ENCODE measurements at regions of chr5 and their contacts with region 1.

Region 1: GRCh38 chr5:133111299-133111698 is 59.5 kb downstream of the HSPA4 start:
- DNase-seq: peak; percentile 85 to 93
- ATAC-seq: peak; percentile 80 to 88 (median 82)
- H3K4me3 ChIP-seq: no peak overlapping the region
- H3K27ac ChIP-seq: no peak overlapping the region
- H3K4me1 ChIP-seq: peaks cover 20% of the 10 kb centered on the region
- H3K27me3 ChIP-seq: no peaks in the 10 kb centered on the region
- CTCF ChIP-seq: peak; percentile 91

Region 2: DNA sequence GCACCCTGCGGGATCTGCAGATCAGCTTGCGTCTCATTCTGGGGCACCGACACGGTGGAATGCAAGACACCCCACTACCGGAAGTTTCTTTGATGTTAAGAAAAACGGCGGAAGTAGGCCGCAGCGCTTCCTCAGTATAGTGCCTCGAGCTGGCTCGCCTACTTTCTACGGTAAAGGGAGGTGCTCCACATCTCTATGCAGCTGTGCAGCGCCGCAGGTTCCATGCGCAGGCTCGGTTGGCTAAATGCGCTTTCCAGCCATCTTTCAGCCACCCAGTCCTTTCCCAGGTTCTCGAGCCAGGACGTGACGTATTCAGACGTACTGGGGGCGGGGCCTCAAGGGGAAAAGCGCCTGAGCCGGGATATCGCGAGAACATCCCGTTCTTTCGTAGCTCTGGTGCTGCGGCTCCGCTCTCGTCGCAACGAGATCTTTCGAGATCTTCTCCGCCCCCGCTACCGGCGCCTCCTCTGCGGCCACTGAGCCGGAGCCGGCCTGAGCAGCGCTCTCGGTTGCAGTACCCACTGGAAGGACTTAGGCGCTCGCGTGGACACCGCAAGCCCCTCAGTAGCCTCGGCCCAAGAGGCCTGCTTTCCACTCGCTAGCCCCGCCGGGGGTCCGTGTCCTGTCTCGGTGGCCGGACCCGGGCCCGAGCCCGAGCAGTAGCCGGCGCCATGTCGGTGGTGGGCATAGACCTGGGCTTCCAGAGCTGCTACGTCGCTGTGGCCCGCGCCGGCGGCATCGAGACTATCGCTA is 59.5 kb before region 1 on chr5 and contains the start of gene HSPA4:
- intact Hi-C with region 1: no loop called
- DNase-seq: peak; percentile 97 to 98
- ATAC-seq: peak; percentile 91 to 92 (median 92)
- H3K4me3 ChIP-seq: peak within 1 kb of the TSS; percentile 98
- H3K27ac ChIP-seq: peak within 1 kb of the TSS; percentile 100
- H3K4me1 ChIP-seq: peaks cover 39% of the 10 kb centered on the region
- H3K27me3 ChIP-seq: no peaks in the 10 kb centered on the region
- CTCF ChIP-seq: no peak
- total RNA-seq, gene HSPA4: 108 to 154 (median 130) TPM

Region 3: DNA sequence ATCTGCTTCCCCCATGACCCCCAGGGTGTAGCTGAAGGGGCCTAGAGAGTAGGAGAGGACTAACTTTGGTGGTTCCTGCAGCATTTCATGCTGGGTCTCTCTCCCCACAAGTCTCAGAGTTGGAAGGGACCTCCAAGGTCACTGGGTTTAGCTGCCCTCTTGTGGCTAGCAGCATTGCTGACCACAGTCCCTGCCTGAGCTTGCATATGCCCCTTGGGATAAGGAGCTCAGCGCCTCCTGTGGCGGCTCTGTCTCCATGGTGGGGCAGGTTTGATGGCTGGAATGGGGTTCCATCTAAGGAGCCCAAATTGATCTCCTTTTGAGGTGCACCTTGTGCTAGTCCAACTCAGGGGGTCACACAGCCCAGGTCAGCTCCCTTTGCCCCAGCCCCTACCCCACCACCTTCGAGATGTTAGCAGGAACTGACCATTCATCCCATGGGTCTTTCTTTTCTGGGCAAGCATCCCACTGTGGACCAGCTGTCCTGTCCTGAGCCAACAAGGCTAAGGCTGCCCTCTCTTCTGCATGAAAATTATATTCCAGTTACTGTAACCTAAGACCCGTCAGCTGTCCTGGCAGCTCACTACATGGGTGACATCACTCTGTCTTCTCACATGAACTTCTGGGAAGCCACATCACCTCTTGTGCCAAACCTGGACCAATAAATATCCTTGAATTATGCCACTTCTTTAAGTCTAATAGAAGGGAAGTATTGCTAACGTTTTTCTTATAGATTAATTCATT is 136.8 kb after region 1 on chr5:
- intact Hi-C with region 1: loop called (anchors 2 to 10 kb)
- DNase-seq: peak; percentile 55 to 80
- ATAC-seq: peak; percentile 93 to 96 (median 94)
- H3K4me3 ChIP-seq: no peak overlapping the region
- H3K27ac ChIP-seq: peak overlapping the region; percentile 71
- H3K4me1 ChIP-seq: peaks cover 27% of the 10 kb centered on the region
- H3K27me3 ChIP-seq: no peaks in the 10 kb centered on the region
- CTCF ChIP-seq: peak; percentile 62

Region 4: GRCh38 chr5:133260715-133261114 is 149.4 kb after region 1 on chr5:
- intact Hi-C with region 1: loop called (anchors 2 to 10 kb)
- DNase-seq: no peak
- ATAC-seq: peak; percentile 50 to 77 (median 66)
- H3K4me3 ChIP-seq: no peak overlapping the region
- H3K27ac ChIP-seq: peak overlapping the region; percentile 63
- H3K4me1 ChIP-seq: peaks cover 9% of the 10 kb centered on the region
- H3K27me3 ChIP-seq: no peaks in the 10 kb centered on the region
- CTCF ChIP-seq: peak; percentile 30

Region 5: GRCh38 chr5:133287500-133287899 is 176.2 kb after region 1 on chr5:
- intact Hi-C with region 1: loop called (anchors 1 to 2 kb)
- DNase-seq: peak; percentile 62 to 66
- ATAC-seq: peak; percentile 29 to 57 (median 47)
- H3K4me3 ChIP-seq: no peak overlapping the region
- H3K27ac ChIP-seq: no peak overlapping the region
- H3K4me1 ChIP-seq: peaks cover 14% of the 10 kb centered on the region
- H3K27me3 ChIP-seq: no peaks in the 10 kb centered on the region
- CTCF ChIP-seq: peak; percentile 66

Region 6: DNA sequence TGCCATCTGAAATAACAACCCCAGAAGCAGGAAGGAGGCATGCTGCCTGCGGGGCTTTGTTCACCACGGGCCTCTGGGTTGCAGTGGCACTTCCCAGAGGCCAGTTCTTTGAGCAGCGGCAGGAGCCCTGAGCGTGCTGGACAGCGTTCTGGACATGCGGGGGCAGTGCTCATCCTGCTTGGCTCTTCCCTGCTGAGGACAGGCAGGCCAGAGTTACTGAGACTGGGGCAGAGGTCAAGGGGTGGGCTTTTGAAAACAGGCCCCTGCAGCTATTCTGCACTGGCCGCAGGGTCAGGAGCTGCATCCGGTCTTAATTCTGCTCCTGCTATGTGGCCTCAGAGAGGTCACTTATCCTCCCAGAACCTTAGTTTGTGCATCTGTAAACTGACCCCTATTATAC is 242.4 kb after region 1 on chr5:
- intact Hi-C with region 1: loop called in 1 of 2 experiments (anchors 10 kb)
- DNase-seq: no peak
- ATAC-seq: peak in 1 of 4 donors; percentile 29
- H3K4me3 ChIP-seq: no peak overlapping the region
- H3K27ac ChIP-seq: no peak overlapping the region
- H3K4me1 ChIP-seq: no peaks in the 10 kb centered on the region
- H3K27me3 ChIP-seq: no peaks in the 10 kb centered on the region
- CTCF ChIP-seq: no peak

Region 7: DNA sequence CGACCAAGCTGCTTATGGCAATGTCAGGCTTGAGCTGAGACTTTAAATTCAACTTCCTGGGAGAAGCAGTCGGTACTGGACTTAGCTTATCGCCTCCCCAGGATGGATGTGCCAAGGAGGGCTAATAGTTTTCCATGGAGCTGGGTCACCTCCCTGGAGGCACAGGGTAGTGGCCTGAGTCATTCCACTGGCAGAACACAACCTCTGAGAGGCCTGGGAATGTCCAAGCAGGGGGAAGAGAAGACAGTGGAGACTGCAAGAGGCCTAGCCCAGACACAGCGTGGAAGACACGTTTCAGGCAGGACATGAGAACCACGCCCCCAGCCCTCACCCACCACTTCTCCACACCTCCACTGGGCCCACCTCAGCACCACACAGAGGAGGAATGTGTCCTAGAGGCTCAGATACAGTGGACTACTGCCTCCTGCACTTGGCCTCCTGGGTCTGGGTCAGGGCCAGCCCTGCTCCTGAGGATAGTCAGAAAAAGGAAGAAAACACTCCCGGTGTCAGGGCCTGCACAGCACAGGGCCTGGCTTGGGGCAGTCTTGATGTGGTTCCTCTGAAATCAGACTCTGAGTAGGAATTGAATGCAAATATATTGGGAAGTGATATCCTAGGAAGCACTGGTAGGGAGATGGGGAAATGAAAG is 329.3 kb after region 1 on chr5:
- intact Hi-C with region 1: no loop called
- DNase-seq: peak in 1 of 2 donors; percentile 46
- ATAC-seq: peak in 3 of 4 donors; percentile 44 to 56 (median 47)
- H3K4me3 ChIP-seq: no peak overlapping the region
- H3K27ac ChIP-seq: no peak overlapping the region
- H3K4me1 ChIP-seq: no peaks in the 10 kb centered on the region
- H3K27me3 ChIP-seq: no peaks in the 10 kb centered on the region
- CTCF ChIP-seq: no peak

Region 8: GRCh38 chr5:133610489-133611356 is 499.4 kb after region 1 on chr5:
- intact Hi-C with region 1: loop called in 1 of 2 experiments (anchors 10 kb)
- DNase-seq: peak; percentile 61 to 75
- ATAC-seq: peak; percentile 90 to 96 (median 94)
- H3K4me3 ChIP-seq: peak overlapping the region; percentile 52
- H3K27ac ChIP-seq: no peak overlapping the region
- H3K4me1 ChIP-seq: peaks cover 16% of the 10 kb centered on the region
- H3K27me3 ChIP-seq: peaks cover 0 to 90% (median 14%) of the 10 kb centered on the region in 3 donors
- CTCF ChIP-seq: peak; percentile 56

Region 9: GRCh38 chr5:133944263-133945185 is 833.2 kb after region 1 on chr5:
- intact Hi-C with region 1: loop called in 1 of 2 experiments (anchors 5 kb)
- DNase-seq: no peak
- ATAC-seq: peak; percentile 47 to 72 (median 58)
- H3K4me3 ChIP-seq: no peak overlapping the region
- H3K27ac ChIP-seq: no peak overlapping the region
- H3K4me1 ChIP-seq: no peaks in the 10 kb centered on the region
- H3K27me3 ChIP-seq: no peaks in the 10 kb centered on the region
- CTCF ChIP-seq: peak; percentile 49